ENCODE measurements at regions of chr4 and their contacts with region 1.

Region 1: DNA sequence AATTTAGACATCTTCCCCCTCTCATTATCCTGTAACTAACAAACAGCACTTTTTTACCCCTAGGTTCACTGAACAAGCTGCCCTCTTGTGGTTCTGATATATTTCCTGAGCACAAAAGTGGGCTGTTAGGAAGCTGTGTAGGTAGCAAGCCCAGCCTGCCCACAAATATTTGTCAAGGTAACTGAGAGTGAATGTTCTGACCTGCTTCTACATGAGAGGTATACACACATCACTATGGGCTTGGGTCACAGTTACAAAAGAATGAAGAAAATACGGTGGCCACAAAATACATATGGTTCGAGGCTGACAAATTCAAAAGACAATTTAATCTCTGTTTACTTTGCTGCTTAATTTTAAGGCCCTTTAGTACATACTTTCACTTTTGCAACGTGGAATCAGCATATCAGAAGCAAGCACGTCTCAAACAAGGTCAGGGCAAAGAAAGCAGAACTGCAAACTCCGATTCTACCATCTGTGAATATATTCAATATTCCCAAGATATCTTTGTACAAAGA is 78.7 kb downstream of the RBM47 start:
- DNase-seq: peak; percentile 52
- ATAC-seq: peak; percentile 68
- H3K4me3 ChIP-seq: peak overlapping the region; percentile 28
- H3K27ac ChIP-seq: no peak overlapping the region
- H3K4me1 ChIP-seq: 0 out of 2 replicates have a peak, but pooled peaks cover 5% of the 10 kb centered on the region
- H3K27me3 ChIP-seq: no peaks in the 10 kb centered on the region
- CTCF ChIP-seq: peak; percentile 36
- POLR2A ChIP-seq: no peak
- RAD21 ChIP-seq: no peak; the same call in 1 of the 2 replicates

Region 2: GRCh38 chr4:40530961-40531635 is 19.9 kb before region 1 on chr4:
- CTCF ChIA-PET with region 1: no interaction called
- POLR2A ChIA-PET with region 1: no interaction called
- dilution Hi-C with region 1: no loop called
- in situ Hi-C with region 1: no loop called
- intact Hi-C with region 1: loop called (anchors 2 kb)
- DNase-seq: no peak
- ATAC-seq: no peak
- H3K4me3 ChIP-seq: no peak overlapping the region
- H3K27ac ChIP-seq: no peak overlapping the region
- H3K4me1 ChIP-seq: peaks cover 4% of the 10 kb centered on the region; the same call in 1 of the 2 replicates
- H3K27me3 ChIP-seq: no peaks in the 10 kb centered on the region
- CTCF ChIP-seq: no peak
- POLR2A ChIP-seq: no peak
- RAD21 ChIP-seq: no peak

Region 3: DNA sequence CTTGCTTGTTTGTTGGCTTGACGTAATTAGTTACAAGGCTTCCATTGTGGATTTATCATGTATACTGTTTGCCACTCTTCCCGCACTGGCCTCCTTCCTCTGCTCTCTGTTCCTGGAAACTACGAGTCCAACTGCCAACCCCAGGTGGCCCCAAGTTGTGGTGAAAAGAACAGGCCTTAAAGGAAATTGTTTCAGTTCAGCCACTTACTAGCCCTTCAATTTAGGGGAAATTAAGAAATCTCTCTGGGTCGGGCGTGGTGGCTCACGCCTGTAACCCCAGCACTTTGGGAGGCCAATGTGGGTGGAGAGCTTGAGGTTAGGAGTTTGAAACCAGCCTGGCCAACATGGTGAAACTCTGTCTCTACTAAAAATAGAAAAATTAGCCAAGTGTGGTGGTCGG is 50.6 kb after region 1 on chr4:
- CTCF ChIA-PET with region 1: no interaction called
- POLR2A ChIA-PET with region 1: no interaction called
- dilution Hi-C with region 1: no loop called
- in situ Hi-C with region 1: no loop called
- intact Hi-C with region 1: no loop called
- DNase-seq: no peak
- ATAC-seq: no peak
- H3K4me3 ChIP-seq: no peak overlapping the region
- H3K27ac ChIP-seq: no peak overlapping the region
- H3K4me1 ChIP-seq: no peaks in the 10 kb centered on the region
- H3K27me3 ChIP-seq: no peaks in the 10 kb centered on the region
- CTCF ChIP-seq: no peak
- POLR2A ChIP-seq: no peak
- RAD21 ChIP-seq: no peak

Region 4: GRCh38 chr4:40621592-40622512 is 70.8 kb after region 1 on chr4:
- CTCF ChIA-PET with region 1: no interaction called
- POLR2A ChIA-PET with region 1: no interaction called
- dilution Hi-C with region 1: no loop called
- in situ Hi-C with region 1: no loop called
- intact Hi-C with region 1: loop called (anchors 1 kb)
- DNase-seq: peak; percentile 98
- ATAC-seq: peak; percentile 95
- H3K4me3 ChIP-seq: no peak overlapping the region
- H3K27ac ChIP-seq: no peak overlapping the region
- H3K4me1 ChIP-seq: peaks cover 15% of the 10 kb centered on the region
- H3K27me3 ChIP-seq: no peaks in the 10 kb centered on the region; the same call in 1 of the 2 replicates
- CTCF ChIP-seq: no peak
- POLR2A ChIP-seq: no peak
- RAD21 ChIP-seq: no peak

Region 5: GRCh38 chr4:42078184-42078801 is 1527.3 kb after region 1 on chr4:
- CTCF ChIA-PET with region 1: no interaction called
- POLR2A ChIA-PET with region 1: no interaction called
- dilution Hi-C with region 1: no loop called
- in situ Hi-C with region 1: no loop called
- intact Hi-C with region 1: no loop called
- DNase-seq: no peak
- ATAC-seq: no peak
- H3K4me3 ChIP-seq: no peak overlapping the region
- H3K27ac ChIP-seq: no peak overlapping the region
- H3K4me1 ChIP-seq: no peaks in the 10 kb centered on the region
- H3K27me3 ChIP-seq: no peaks in the 10 kb centered on the region
- CTCF ChIP-seq: no peak
- POLR2A ChIP-seq: no peak
- RAD21 ChIP-seq: no peak

Measured in IMR-90 (cell line).